H1 (cell line): ENCODE measurements at regions of chr21 and their contacts with region 1.

Region 1: DNA sequence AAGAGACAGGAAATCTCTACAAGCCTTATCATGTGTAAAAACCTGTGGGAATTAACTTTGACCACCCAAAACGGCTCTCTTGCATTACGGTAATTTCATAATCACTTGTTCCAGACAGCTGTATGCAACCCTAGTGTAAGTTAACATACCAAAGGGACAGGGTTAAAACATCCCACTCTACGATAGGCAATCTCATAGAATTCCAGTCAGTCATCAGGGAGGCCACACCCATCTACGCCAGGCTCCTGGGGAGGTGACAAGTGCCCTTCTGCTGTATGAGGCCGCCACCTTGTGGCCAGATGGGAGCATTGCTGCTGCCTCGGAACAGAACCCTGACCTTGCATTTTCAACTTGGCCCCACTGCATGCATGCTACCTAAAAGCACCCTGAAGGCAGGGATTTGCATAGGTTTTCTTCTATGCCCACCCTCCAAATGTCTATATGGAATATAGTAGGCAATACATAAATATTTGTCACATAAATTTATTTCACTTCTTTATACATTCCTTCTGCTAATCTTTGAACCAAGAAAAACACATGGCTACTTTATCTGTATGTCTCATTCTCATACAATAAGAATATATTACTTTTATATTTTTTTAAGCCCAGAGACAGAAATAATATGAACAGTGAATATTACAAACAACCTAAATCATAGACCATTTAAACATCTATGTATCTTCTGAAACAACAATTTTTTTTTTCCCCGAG is 12.6 kb downstream of the HSF2BP start:
- DNase-seq: peak; percentile 85 to 93
- H3K4me3 ChIP-seq: no peak overlapping the region
- H3K27ac ChIP-seq: no peak overlapping the region
- H3K4me1 ChIP-seq: no peaks in the 10 kb centered on the region
- H3K27me3 ChIP-seq: no peaks in the 10 kb centered on the region
- CTCF ChIP-seq: peak; percentile 96 to 100 (median 99)
- EP300 ChIP-seq: no peak
- POLR2A ChIP-seq: no peak
- RAD21 ChIP-seq: peak; percentile 100

Region 2: DNA sequence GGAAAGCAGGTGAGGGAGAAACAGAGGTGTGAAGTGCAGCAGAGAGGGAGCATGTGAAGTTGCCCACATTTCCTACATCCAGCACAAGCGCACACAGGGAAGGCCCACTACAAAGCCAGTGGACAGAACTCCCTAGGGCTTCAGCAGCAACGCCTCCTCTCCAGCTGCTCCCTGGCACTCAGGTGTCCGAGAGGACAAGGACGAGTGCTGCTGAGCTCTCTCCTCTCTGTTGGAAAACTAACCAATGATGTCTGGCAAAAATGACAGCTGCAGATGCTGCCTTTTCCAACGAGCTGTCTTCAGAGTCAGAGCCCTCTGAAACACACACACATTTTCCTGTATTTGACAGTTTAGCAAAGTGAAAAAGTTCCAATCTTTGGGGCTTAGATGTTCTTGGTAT is 74.3 kb before region 1 on chr21:
- CTCF ChIA-PET with region 1: no interaction called
- POLR2A ChIA-PET with region 1: no interaction called
- DNase-seq: no peak
- H3K4me3 ChIP-seq: no peak overlapping the region
- H3K27ac ChIP-seq: no peak overlapping the region
- H3K4me1 ChIP-seq: peaks cover 0 to 3% (median 1%) of the 10 kb centered on the region in 4 experiments; a peak in 2 of 7 replicates
- H3K27me3 ChIP-seq: 0 out of 7 replicates have a peak, but pooled peaks cover 0 to 2% (median 0%) of the 10 kb centered on the region in 4 experiments
- CTCF ChIP-seq: no peak
- EP300 ChIP-seq: no peak
- POLR2A ChIP-seq: no peak
- RAD21 ChIP-seq: no peak

Region 3: DNA sequence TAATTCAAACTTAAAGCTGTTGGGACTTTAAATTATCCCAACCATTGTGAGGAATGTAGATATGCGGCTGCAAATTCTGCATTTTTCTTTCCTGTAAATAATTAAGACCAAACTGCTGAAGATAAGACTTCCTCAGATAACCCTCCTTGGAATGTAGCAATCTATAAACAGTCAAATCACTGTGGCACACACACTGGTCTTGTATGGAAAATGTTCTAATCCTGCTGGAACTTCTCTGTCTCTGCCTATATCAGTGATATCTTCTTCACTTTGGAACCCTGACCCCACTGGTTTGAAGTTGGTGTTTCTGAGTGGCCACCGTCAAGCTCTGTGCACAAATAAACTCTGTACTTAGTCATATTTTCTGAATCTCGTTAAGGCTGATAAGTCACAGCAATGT is 20.3 kb before region 1 on chr21:
- CTCF ChIA-PET with region 1: interaction called, 10 read pairs
- POLR2A ChIA-PET with region 1: no interaction called
- DNase-seq: no peak
- H3K4me3 ChIP-seq: no peak overlapping the region
- H3K27ac ChIP-seq: no peak overlapping the region
- H3K4me1 ChIP-seq: no peaks in the 10 kb centered on the region; a peak in 1 of 7 replicates
- H3K27me3 ChIP-seq: no peaks in the 10 kb centered on the region
- CTCF ChIP-seq: no peak
- EP300 ChIP-seq: no peak
- POLR2A ChIP-seq: no peak
- RAD21 ChIP-seq: no peak